Activated naive CD8-positive, alpha-beta T cell treated with anti-CD3 and anti-CD28 coated beads, Interleukin-2, amount 10 ng/mL, durations not matched to agents 7 days and 5 days (primary cell): ENCODE measurements at regions of chr20 and their contacts with region 1.

Region 1: GRCh38 chr20:43667341-43668132 is 623 bp downstream of the MYBL2 start:
- DNase-seq: peak; percentile 46
- ATAC-seq: peak; percentile 18
- H3K4me3 Mint-ChIP-seq: peak overlapping the region; percentile 86
- H3K27ac Mint-ChIP-seq: peak overlapping the region; percentile 75
- H3K4me1 Mint-ChIP-seq: peaks cover 12% of the 10 kb centered on the region
- H3K27me3 Mint-ChIP-seq: peaks cover 3% of the 10 kb centered on the region

Region 2: DNA sequence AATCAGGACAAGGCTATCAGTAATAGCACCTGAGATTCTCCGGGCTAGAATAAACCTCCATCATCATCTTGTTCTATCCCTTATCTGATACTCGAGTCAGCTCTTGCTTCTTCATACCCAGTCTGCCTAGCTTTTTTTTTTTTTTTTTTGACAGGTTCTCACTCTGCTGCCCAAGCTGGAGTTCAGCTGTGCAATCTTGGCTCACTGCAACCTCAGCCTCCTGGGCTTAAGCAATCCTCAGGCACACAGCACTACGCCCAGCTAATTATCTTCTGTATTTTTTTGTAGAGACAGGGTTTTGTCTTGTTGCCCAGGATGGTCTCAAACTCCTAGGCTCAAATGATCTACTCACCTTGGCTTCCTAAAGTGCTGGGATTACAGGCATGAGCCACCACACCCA is 190.3 kb before region 1 on chr20:
- POLR2A ChIA-PET with region 1: no interaction called
- DNase-seq: no peak
- ATAC-seq: no peak
- H3K4me3 Mint-ChIP-seq: no peak overlapping the region
- H3K27ac Mint-ChIP-seq: no peak overlapping the region
- H3K4me1 Mint-ChIP-seq: peaks cover 2% of the 10 kb centered on the region
- H3K27me3 Mint-ChIP-seq: peaks cover 19% of the 10 kb centered on the region

Region 3: GRCh38 chr20:43590392-43591323 is 76.9 kb before region 1 on chr20 and contains the start of gene IFT52:
- POLR2A ChIA-PET with region 1: interaction called, 10 read pairs
- DNase-seq: peak; percentile 87
- ATAC-seq: peak; percentile 98
- H3K4me3 Mint-ChIP-seq: peak within 1 kb of the TSS; percentile 82
- H3K27ac Mint-ChIP-seq: peak within 1 kb of the TSS; percentile 92
- H3K4me1 Mint-ChIP-seq: peaks cover 10% of the 10 kb centered on the region
- H3K27me3 Mint-ChIP-seq: peaks cover under 1% of the 10 kb centered on the region
- total RNA-seq, gene IFT52: 17.4 to 17.8 TPM

Region 4: DNA sequence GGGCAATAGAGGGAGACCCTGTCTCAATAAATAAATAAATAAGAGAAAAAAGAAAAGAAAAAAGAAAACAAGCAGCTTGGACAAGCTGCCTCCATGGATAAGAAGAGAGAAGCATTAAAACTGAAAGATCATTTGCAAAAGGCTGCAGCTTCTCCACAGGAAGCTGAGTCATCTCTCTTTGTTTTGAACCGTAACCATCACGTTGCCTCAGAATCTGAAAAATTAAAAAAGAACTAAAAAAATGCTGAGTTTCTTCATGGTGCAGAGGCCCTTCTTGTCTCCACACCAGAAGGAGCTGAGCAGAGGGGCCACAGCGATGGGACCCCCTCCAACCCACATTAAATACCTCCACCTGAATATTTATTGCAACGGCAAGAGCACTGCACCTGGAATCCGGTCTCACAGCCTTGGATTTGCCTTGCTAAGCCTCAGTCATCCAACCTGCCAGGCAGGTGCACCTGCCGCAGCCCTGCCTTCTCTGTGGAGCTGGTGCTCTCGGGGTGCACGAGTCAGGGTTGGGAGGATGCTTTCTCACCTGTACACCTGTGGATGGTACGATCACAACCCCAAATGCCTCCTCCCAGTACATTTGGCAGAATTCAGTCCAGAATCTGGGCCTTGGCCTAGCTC is 275.2 kb after region 1 on chr20:
- POLR2A ChIA-PET with region 1: no interaction called
- DNase-seq: no peak
- ATAC-seq: peak; percentile 74
- H3K4me3 Mint-ChIP-seq: peak overlapping the region; percentile 55
- H3K27ac Mint-ChIP-seq: peak overlapping the region; percentile 67
- H3K4me1 Mint-ChIP-seq: peaks cover 44% of the 10 kb centered on the region
- H3K27me3 Mint-ChIP-seq: peaks cover 36% of the 10 kb centered on the region